ENCODE measurements at regions of chr16 and their contacts with region 1.

Region 1: GRCh38 chr16:31179747-31180459 is at the start of gene FUS:
- DNase-seq: peak; percentile 94
- ATAC-seq: peak; percentile 56
- H3K4me3 Mint-ChIP-seq: peak within 1 kb of the TSS; percentile 95
- H3K27ac Mint-ChIP-seq: peak within 1 kb of the TSS; percentile 99
- H3K4me1 Mint-ChIP-seq: peaks cover 51% of the 10 kb centered on the region
- H3K27me3 Mint-ChIP-seq: no peaks in the 10 kb centered on the region
- total RNA-seq, gene FUS: 647 to 648 TPM

Region 2: DNA sequence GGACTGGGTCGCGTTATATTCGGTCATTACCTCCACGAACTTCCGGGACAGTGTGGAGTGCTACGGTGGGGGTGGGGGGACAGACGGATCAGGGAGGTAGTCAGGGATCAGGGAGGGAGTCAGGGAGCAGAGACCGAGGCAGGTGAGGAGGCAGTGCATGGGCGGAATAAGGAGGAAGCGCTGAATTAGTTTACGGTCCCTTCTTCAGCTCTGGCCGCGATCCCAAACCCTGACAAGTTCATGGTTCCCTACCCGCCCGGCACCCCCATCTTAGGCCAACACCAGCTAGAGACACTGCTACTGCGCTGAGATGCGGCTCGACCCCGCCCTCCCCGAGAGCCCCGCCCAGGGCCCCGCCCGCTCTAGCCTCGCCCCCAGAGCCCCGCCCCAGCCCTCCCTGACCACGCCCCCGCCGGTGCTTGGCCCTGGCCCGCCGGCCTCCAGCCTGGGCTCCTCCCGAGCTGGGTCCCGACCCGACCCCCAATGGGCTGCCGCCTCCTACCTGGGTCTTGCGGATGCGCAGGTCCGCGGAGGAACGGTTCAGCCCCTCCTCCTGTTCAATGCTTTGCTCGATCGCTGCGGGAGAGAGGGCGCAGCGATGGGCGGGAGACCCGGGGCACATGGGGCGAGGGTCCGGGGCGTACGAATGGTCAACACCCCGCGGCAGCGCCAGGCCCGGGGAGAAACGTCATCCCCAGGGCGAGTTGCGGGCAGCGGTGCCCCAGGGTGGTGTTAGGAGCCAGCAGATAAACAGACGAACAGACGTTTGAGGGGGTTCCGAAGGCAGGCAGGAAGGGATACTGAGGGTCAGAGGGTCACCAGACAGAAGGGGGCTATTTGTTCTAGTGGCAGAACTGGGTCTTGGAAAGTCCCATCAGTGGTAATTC is 182.7 kb before region 1 on chr16:
- CTCF ChIA-PET with region 1: no interaction called
- POLR2A ChIA-PET with region 1: interaction called, 3 read pairs
- intact Hi-C with region 1: loop called in 1 of 2 experiments (anchors 1 kb)
- DNase-seq: peak; percentile 94
- ATAC-seq: peak; percentile 95
- H3K4me3 Mint-ChIP-seq: peak overlapping the region; percentile 72
- H3K27ac Mint-ChIP-seq: no peak overlapping the region
- H3K4me1 Mint-ChIP-seq: peaks cover 16% of the 10 kb centered on the region
- H3K27me3 Mint-ChIP-seq: peaks cover 3% of the 10 kb centered on the region

Region 3: GRCh38 chr16:31094424-31095120 is 85.3 kb before region 1 on chr16 and contains the start of gene VKORC1:
- CTCF ChIA-PET with region 1: no interaction called
- POLR2A ChIA-PET with region 1: interaction called, 3 read pairs
- intact Hi-C with region 1: loop called in 1 of 2 experiments (anchors 1 kb)
- DNase-seq: peak; percentile 96
- ATAC-seq: peak; percentile 92
- H3K4me3 Mint-ChIP-seq: peak within 1 kb of the TSS; percentile 98
- H3K27ac Mint-ChIP-seq: peak within 1 kb of the TSS; percentile 89
- H3K4me1 Mint-ChIP-seq: peaks cover 25% of the 10 kb centered on the region
- H3K27me3 Mint-ChIP-seq: no peaks in the 10 kb centered on the region
- total RNA-seq, gene VKORC1: 59.6 to 64.2 TPM

Region 4: DNA sequence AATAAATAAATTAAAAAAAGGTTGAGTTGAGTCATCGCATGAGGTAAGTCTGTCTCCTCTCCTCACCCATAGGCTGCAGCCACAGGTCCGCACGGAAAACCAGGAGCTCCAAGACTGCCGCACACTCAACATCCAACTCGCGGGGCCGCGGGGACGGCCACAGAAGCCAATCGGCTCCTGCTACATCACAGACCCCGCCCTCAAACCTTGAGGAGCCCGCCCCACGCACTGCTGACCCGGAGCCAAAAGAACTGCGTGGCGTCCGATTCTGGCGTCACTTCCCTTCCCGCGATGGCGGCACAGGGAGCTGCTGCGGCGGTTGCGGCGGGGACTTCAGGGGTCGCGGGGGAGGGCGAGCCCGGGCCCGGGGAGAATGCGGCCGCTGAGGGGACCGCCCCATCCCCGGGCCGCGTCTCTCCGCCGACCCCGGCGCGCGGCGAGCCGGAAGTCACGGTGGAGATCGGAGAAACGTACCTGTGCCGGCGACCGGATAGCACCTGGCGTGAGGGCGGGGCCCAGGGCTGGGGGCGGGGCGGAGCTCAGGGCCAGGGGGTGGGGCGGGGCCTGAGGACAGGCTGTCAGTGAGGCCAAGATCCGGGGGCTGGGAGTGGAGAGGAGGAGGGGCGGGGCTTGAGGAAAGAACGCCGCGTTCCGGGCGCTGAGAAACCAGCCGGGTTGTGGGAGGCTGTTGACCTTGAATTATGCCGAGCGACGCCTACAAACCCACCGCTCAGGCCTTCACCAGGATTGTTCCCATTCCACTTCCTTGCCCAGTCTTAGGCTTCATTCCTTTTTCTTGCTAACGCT is 62.3 kb before region 1 on chr16 and contains the start of gene KAT8:
- CTCF ChIA-PET with region 1: no interaction called
- POLR2A ChIA-PET with region 1: interaction called, 10 read pairs
- intact Hi-C with region 1: loop called (anchors 1 kb)
- DNase-seq: peak; percentile 99
- ATAC-seq: peak; percentile 93
- H3K4me3 Mint-ChIP-seq: peak within 1 kb of the TSS; percentile 88
- H3K27ac Mint-ChIP-seq: peak within 1 kb of the TSS; percentile 83
- H3K4me1 Mint-ChIP-seq: peaks cover 14% of the 10 kb centered on the region
- H3K27me3 Mint-ChIP-seq: no peaks in the 10 kb centered on the region
- total RNA-seq, gene KAT8: 53.6 to 63.1 TPM

Region 5: GRCh38 chr16:31196324-31197088 is 16.6 kb after region 1 on chr16:
- CTCF ChIA-PET with region 1: interaction called, 4 read pairs
- POLR2A ChIA-PET with region 1: interaction called, 16 read pairs
- intact Hi-C with region 1: loop called (anchors 2 kb)
- DNase-seq: no peak
- ATAC-seq: no peak
- H3K4me3 Mint-ChIP-seq: no peak overlapping the region
- H3K27ac Mint-ChIP-seq: no peak overlapping the region
- H3K4me1 Mint-ChIP-seq: peaks cover 61% of the 10 kb centered on the region
- H3K27me3 Mint-ChIP-seq: no peaks in the 10 kb centered on the region

Region 6: GRCh38 chr16:31713071-31713944 is 533.4 kb after region 1 on chr16:
- CTCF ChIA-PET with region 1: interaction called, 3 read pairs
- POLR2A ChIA-PET with region 1: interaction called, 4 read pairs
- intact Hi-C with region 1: loop called in 1 of 2 experiments (anchors 5 kb)
- DNase-seq: peak; percentile 95
- ATAC-seq: peak; percentile 91
- H3K4me3 Mint-ChIP-seq: peak overlapping the region; percentile 96
- H3K27ac Mint-ChIP-seq: peak overlapping the region; percentile 99
- H3K4me1 Mint-ChIP-seq: peaks cover 47% of the 10 kb centered on the region
- H3K27me3 Mint-ChIP-seq: no peaks in the 10 kb centered on the region